ENCODE measurements at regions of chr4 and their contacts with region 1.

Region 1: DNA sequence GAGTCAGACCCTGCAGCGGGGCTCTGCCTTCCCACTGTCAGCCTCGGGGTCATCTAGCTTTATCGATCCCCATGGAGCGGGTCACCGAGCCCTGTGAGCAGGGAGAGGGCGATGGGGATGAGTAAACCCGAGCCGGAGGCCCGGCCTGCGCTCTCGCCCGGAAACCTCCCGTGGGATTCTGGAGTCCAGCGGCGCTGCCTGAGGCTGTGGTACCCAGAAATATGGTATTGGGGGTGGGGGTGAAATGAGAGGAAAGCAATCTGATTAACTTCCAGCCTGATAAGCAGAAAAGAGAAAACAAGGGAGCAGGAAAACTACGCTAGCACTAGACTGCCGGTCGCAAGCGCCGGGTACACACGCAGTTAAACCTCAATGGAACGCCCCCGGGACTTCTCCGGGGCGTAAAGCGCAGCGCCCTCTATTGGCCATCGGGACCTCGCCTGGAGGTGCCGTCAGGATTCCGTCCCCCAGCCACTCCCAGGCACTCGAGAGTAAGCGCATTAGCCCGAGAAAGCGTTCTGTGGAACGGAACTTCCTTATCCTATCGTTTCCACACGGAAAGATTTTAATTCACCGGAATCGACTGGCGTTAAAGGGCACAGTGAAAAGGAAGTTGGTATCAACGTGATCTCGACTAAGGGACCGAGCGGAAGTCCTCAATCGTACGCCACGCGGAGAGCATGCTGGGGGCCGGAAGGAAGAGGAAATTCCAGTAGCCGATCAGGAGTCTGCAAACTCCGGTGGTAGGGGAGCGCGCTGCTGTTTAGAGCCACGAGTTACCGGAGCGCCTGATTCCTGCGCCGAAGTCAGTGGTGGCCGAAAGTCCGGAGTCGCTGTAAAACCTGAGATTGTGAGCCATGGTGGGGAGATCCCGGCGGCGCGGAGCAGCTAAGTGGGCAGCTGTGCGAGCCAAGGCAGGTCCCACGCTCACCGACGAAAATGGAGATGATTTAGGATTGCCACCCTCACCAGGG is at the start of gene UTP3:
- DNase-seq: peak; percentile 100
- ATAC-seq: peak; percentile 95
- H3K4me3 ChIP-seq: peak within 1 kb of the TSS; percentile 89
- H3K27ac ChIP-seq: peak within 1 kb of the TSS; percentile 68
- H3K4me1 ChIP-seq: peaks cover 21% of the 10 kb centered on the region
- H3K27me3 ChIP-seq: no peaks in the 10 kb centered on the region
- CTCF ChIP-seq: peak; percentile 99
- total RNA-seq, gene UTP3: 27.8 and 38.5 TPM in 2 replicates

Region 2: DNA sequence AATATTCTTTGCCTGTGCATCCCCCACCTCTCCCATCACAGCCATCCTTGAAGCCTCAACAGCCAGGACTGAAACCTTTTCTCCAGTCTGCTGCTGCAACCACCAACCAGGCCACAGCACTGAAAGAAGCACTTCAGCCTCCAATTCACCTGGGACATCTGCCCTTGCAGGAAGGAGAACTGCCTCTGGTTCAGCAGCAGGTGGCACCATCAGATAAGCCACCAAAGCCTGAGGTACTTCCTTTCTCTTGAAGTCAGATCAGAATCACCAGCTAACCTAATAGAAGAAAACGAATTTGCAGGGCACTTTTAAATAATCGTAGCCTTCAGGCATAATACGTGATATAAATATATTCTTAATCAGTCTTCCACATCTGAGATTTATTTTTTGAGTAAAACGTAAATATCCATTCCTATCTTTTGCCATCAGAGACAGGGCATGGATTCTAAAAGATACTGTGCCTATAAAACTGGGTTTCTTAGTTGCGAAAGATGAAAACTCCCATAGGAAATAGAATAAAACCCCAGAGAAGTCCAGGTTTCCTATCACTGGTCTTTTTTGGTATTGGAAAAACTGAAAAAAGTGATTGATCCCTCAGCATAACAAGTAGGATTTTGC is 86.6 kb before region 1 on chr4:
- CTCF ChIA-PET with region 1: no interaction called
- POLR2A ChIA-PET with region 1: no interaction called
- intact Hi-C with region 1: loop called (anchors 1 kb)
- DNase-seq: peak; percentile 83
- ATAC-seq: peak; percentile 98
- H3K4me3 ChIP-seq: no peak overlapping the region
- H3K27ac ChIP-seq: no peak overlapping the region
- H3K4me1 ChIP-seq: no peaks in the 10 kb centered on the region
- H3K27me3 ChIP-seq: no peaks in the 10 kb centered on the region
- CTCF ChIP-seq: peak; percentile 93

Region 3: GRCh38 chr4:70704331-70705145 is 16.4 kb after region 1 on chr4:
- CTCF ChIA-PET with region 1: interaction called, 3 read pairs
- POLR2A ChIA-PET with region 1: interaction called, 6 read pairs
- intact Hi-C with region 1: loop called (anchors 1 kb)
- DNase-seq: peak; percentile 81
- ATAC-seq: peak; percentile 50
- H3K4me3 ChIP-seq: peak overlapping the region; percentile 83
- H3K27ac ChIP-seq: peak overlapping the region; percentile 78
- H3K4me1 ChIP-seq: peaks cover 26% of the 10 kb centered on the region
- H3K27me3 ChIP-seq: no peaks in the 10 kb centered on the region
- CTCF ChIP-seq: peak; percentile 52

Region 4: GRCh38 chr4:70839589-70840093 is 151.5 kb after region 1 on chr4 and contains the start of gene GRSF1:
- CTCF ChIA-PET with region 1: no interaction called
- POLR2A ChIA-PET with region 1: no interaction called
- intact Hi-C with region 1: loop called (anchors 5 kb)
- DNase-seq: peak; percentile 94
- ATAC-seq: peak; percentile 83
- H3K4me3 ChIP-seq: peak within 1 kb of the TSS; percentile 96
- H3K27ac ChIP-seq: peak within 1 kb of the TSS; percentile 39
- H3K4me1 ChIP-seq: peaks cover 9% of the 10 kb centered on the region
- H3K27me3 ChIP-seq: no peaks in the 10 kb centered on the region
- CTCF ChIP-seq: no peak
- total RNA-seq, gene GRSF1: 102 and 103 TPM in 2 replicates

Region 5: GRCh38 chr4:71050809-71051208 is 362.7 kb after region 1 on chr4:
- CTCF ChIA-PET with region 1: no interaction called
- POLR2A ChIA-PET with region 1: no interaction called
- intact Hi-C with region 1: no loop called
- DNase-seq: peak; percentile 43
- ATAC-seq: peak; percentile 64; the same call in 1 of the 2 replicates
- H3K4me3 ChIP-seq: no peak overlapping the region
- H3K27ac ChIP-seq: no peak overlapping the region
- H3K4me1 ChIP-seq: no peaks in the 10 kb centered on the region
- H3K27me3 ChIP-seq: no peaks in the 10 kb centered on the region
- CTCF ChIP-seq: peak; percentile 29; the same call in 1 of the 2 replicates

Region 6: GRCh38 chr4:71074452-71075299 is 386.6 kb after region 1 on chr4:
- CTCF ChIA-PET with region 1: no interaction called
- POLR2A ChIA-PET with region 1: no interaction called
- intact Hi-C with region 1: no loop called
- DNase-seq: peak; percentile 32
- ATAC-seq: peak; percentile 84
- H3K4me3 ChIP-seq: peak overlapping the region; percentile 45
- H3K27ac ChIP-seq: no peak overlapping the region
- H3K4me1 ChIP-seq: 0 out of 2 replicates have a peak, but pooled peaks cover 6% of the 10 kb centered on the region
- H3K27me3 ChIP-seq: peaks cover 10% of the 10 kb centered on the region; the same call in 1 of the 2 replicates
- CTCF ChIP-seq: no peak

Region 7: GRCh38 chr4:71229477-71230270 is 541.6 kb after region 1 on chr4:
- CTCF ChIA-PET with region 1: no interaction called
- POLR2A ChIA-PET with region 1: interaction called, 23 read pairs
- intact Hi-C with region 1: no loop called
- DNase-seq: peak; percentile 70
- ATAC-seq: peak; percentile 88
- H3K4me3 ChIP-seq: peak overlapping the region; percentile 53
- H3K27ac ChIP-seq: no peak overlapping the region
- H3K4me1 ChIP-seq: peaks cover 6% of the 10 kb centered on the region; the same call in 1 of the 2 replicates
- H3K27me3 ChIP-seq: no peaks in the 10 kb centered on the region
- CTCF ChIP-seq: peak; percentile 90

Measured in PC-3 (cell line).